ENCODE measurements at regions of chr16 and their contacts with region 1.

Region 1: GRCh38 chr16:30922960-30923535 is 324 bp upstream of the FBXL19 start:
- DNase-seq: peak; percentile 95
- H3K4me3 Mint-ChIP-seq: peak overlapping the region; percentile 99
- H3K27ac Mint-ChIP-seq: peak overlapping the region; percentile 100
- H3K4me1 Mint-ChIP-seq: peaks cover 19% of the 10 kb centered on the region
- H3K27me3 Mint-ChIP-seq: no peaks in the 10 kb centered on the region

Region 2: GRCh38 chr16:30657866-30658730 is 264.9 kb before region 1 on chr16 and contains the start of gene FBRS:
- intact Hi-C with region 1: loop called (anchors 1 kb)
- DNase-seq: peak; percentile 100
- H3K4me3 Mint-ChIP-seq: peak within 1 kb of the TSS; percentile 89
- H3K27ac Mint-ChIP-seq: peak within 1 kb of the TSS; percentile 100
- H3K4me1 Mint-ChIP-seq: peaks cover 27% of the 10 kb centered on the region
- H3K27me3 Mint-ChIP-seq: no peaks in the 10 kb centered on the region
- total RNA-seq, gene FBRS: 107 TPM in 2 replicates

Region 3: GRCh38 chr16:30813821-30814189 is 109.2 kb before region 1 on chr16:
- intact Hi-C with region 1: loop called (anchors 1 kb)
- DNase-seq: no peak
- H3K4me3 Mint-ChIP-seq: peak overlapping the region; percentile 92
- H3K27ac Mint-ChIP-seq: peak overlapping the region; percentile 74
- H3K4me1 Mint-ChIP-seq: peaks cover 10% of the 10 kb centered on the region
- H3K27me3 Mint-ChIP-seq: no peaks in the 10 kb centered on the region

Region 4: GRCh38 chr16:30902029-30902972 is 20.7 kb before region 1 on chr16:
- intact Hi-C with region 1: loop called (anchors 1 kb)
- DNase-seq: peak; percentile 60
- H3K4me3 Mint-ChIP-seq: peak overlapping the region; percentile 96
- H3K27ac Mint-ChIP-seq: peak overlapping the region; percentile 100
- H3K4me1 Mint-ChIP-seq: peaks cover 28% of the 10 kb centered on the region
- H3K27me3 Mint-ChIP-seq: no peaks in the 10 kb centered on the region

Region 5: GRCh38 chr16:30972872-30973271 is 49.8 kb after region 1 on chr16:
- intact Hi-C with region 1: no loop called
- DNase-seq: no peak
- H3K4me3 Mint-ChIP-seq: no peak overlapping the region
- H3K27ac Mint-ChIP-seq: no peak overlapping the region
- H3K4me1 Mint-ChIP-seq: no peaks in the 10 kb centered on the region
- H3K27me3 Mint-ChIP-seq: no peaks in the 10 kb centered on the region

Region 6: DNA sequence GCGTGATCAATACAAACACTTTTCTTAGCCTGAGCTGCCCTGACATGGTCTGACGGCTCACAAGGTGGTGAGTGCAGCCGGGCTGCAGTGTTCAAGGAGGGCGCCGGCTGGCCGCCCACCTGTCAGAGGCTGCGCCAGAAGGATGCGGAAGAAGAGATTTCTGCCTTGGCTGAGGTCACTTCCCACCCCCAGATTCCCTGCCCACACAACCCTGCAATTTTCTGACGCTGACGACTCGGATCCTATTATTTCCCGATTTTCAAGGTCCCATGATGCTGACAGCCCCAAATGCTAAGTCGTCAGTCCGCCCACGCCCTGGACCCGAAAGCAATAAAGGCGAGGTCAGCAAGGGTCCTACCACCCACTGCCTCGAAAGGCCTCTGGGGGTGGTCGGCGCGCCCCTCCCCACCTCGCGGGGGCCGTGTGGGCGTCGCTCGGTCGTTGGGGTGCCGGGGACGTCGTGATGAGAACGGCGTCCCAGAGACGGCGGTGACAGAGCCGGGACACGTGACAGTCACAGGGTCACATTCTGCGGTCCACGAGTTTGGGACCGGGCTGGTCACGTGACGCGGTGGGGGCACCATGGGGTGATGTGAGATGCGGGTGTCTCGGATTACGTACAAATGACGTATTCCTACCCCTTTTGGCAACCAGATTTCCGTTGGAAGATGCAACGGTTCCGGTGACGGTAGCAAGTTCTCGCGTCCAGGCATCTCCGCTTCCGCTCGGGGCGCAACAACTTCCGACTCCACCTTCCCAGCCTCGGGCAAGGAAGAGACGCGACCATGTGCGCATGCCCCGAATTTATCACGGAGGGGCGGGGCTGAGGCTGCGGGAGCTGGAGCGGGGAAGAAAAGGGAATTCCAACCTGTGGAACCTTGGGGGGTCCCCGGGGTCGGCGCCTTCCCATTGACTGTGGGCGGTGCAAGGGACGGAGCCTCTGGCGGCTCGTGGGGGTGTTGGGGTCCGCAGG is 110.0 kb after region 1 on chr16 and contains the start of gene STX4:
- intact Hi-C with region 1: loop called (anchors 1 kb)
- DNase-seq: peak; percentile 97
- H3K4me3 Mint-ChIP-seq: peak within 1 kb of the TSS; percentile 87
- H3K27ac Mint-ChIP-seq: peak within 1 kb of the TSS; percentile 89
- H3K4me1 Mint-ChIP-seq: peaks cover 16% of the 10 kb centered on the region
- H3K27me3 Mint-ChIP-seq: no peaks in the 10 kb centered on the region
- total RNA-seq, gene STX4: 48.2 and 51.8 TPM in 2 replicates

Region 7: DNA sequence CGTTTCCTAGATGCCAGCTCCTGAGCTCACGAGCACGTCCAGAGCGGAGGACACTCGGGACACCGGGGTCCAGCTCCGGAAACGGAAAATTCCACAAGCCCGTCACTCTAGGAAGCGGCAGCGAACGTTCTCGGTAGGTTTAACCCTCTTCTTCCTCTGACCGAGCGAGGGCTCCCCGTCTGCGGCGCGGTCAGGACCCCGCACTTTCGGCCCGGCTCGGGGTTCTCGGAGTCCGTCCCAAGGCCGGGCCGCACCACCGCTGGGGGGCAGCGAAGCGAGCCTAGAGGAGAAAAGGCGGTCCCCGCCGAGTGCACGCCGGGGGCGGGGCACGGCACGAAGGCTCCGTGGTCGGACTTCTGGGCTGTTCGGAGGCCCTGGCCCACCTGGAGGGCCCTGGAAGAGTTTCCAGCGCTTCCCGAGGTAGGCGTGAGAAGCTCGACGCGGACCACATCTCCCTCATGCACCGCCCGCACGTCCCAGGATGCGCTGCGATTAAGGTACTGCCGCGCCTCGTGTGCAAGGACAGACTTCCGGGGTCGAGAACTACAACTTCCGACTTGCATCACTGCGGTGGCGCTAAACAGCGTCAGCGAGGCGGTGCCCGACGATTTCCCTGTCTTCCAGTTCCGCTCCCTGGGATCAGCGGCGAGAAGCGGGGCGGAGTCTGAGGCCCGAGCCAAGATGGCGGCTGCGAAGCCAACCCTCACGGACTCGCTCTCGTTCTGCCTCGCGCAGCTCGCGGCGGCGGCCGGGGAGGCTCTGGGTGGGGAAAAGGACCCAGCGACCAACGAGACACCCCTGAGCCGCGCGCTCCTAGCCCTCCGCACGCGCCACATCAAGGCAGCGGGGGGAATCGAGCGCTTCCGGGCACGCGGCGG is 536.0 kb after region 1 on chr16 and contains the start of gene ARMC5:
- intact Hi-C with region 1: loop called (anchors 1 kb)
- DNase-seq: peak; percentile 96
- H3K4me3 Mint-ChIP-seq: peak within 1 kb of the TSS; percentile 89
- H3K27ac Mint-ChIP-seq: peak within 1 kb of the TSS; percentile 96
- H3K4me1 Mint-ChIP-seq: peaks cover 31% of the 10 kb centered on the region
- H3K27me3 Mint-ChIP-seq: no peaks in the 10 kb centered on the region
- total RNA-seq, gene ARMC5: 10.5 and 10.6 TPM in 2 replicates